ENCODE measurements at regions of chrX and their contacts with region 1.

Region 1: DNA sequence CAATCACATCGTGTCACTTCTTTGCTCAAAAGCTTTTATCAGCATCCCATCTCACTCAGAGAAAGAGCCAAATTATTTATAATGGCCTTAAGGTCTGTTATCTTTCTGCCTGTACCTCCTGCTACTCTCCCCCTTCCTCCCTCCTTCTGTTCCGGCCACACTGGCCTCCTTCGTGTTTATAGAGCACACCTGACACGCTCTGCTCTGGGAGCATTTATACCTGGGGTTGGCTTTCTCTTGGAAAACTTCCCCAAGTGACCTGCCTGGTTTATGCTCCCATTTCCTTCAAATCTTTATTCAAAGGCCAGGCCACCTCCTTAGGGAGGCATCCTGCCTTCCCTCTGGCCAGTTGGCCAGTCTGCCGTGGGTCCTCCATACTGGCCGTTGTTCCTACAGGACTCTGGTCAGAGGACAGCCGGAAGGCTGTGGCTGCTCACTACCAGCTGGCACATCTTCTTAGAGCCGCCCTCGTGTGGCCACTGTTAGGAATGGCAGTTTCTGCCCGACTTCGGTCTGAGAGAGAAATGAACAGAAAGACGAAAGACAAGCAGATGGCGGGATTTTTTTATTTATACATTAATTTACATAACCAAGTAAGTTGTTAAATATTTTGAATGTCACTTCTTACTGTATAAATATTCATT is 80.2 kb upstream of the CBLL2 start:
- DNase-seq: peak; percentile 19 to 53 (median 50)
- H3K4me3 ChIP-seq: no peak overlapping the region
- H3K4me3 Mint-ChIP-seq: no peak overlapping the region
- H3K27ac ChIP-seq: no peak overlapping the region
- H3K27ac Mint-ChIP-seq: peak overlapping the region in 1 of 7 donors; percentile 44
- H3K4me1 ChIP-seq: no peaks in the 10 kb centered on the region
- H3K4me1 Mint-ChIP-seq: peaks cover 2% of the 10 kb centered on the region
- H3K27me3 ChIP-seq: no peaks in the 10 kb centered on the region
- H3K27me3 Mint-ChIP-seq: peaks cover 0 to 2% (median 1%) of the 10 kb centered on the region in 3 donors
- CTCF ChIP-seq: peak; percentile 77

Region 2: GRCh38 chrX:21721195-21721594 is 471.3 kb before region 1 on chrX:
- intact Hi-C with region 1: no loop called
- DNase-seq: no peak
- H3K4me3 ChIP-seq: no peak overlapping the region
- H3K4me3 Mint-ChIP-seq: no peak overlapping the region
- H3K27ac ChIP-seq: no peak overlapping the region
- H3K27ac Mint-ChIP-seq: no peak overlapping the region
- H3K4me1 ChIP-seq: peaks cover 3 to 7% of the 10 kb centered on the region in 2 donors
- H3K4me1 Mint-ChIP-seq: peaks cover 7% of the 10 kb centered on the region
- H3K27me3 ChIP-seq: no peaks in the 10 kb centered on the region
- H3K27me3 Mint-ChIP-seq: peaks cover 0 to 2% (median 0%) of the 10 kb centered on the region in 3 donors
- CTCF ChIP-seq: no peak

Region 3: GRCh38 chrX:21985332-21985777 is 207.2 kb before region 1 on chrX:
- intact Hi-C with region 1: loop called (anchors 5 kb)
- DNase-seq: peak; percentile 66 to 69 (median 69)
- H3K4me3 ChIP-seq: no peak overlapping the region
- H3K4me3 Mint-ChIP-seq: no peak overlapping the region
- H3K27ac ChIP-seq: no peak overlapping the region
- H3K27ac Mint-ChIP-seq: peak overlapping the region in 2 of 7 donors; percentile 19 to 31
- H3K4me1 ChIP-seq: peaks cover 0 to 4% of the 10 kb centered on the region in 2 donors
- H3K4me1 Mint-ChIP-seq: peaks cover 10% of the 10 kb centered on the region
- H3K27me3 ChIP-seq: no peaks in the 10 kb centered on the region
- H3K27me3 Mint-ChIP-seq: peaks cover 0 to 2% (median 0%) of the 10 kb centered on the region in 3 donors
- CTCF ChIP-seq: peak; percentile 84

Region 4: DNA sequence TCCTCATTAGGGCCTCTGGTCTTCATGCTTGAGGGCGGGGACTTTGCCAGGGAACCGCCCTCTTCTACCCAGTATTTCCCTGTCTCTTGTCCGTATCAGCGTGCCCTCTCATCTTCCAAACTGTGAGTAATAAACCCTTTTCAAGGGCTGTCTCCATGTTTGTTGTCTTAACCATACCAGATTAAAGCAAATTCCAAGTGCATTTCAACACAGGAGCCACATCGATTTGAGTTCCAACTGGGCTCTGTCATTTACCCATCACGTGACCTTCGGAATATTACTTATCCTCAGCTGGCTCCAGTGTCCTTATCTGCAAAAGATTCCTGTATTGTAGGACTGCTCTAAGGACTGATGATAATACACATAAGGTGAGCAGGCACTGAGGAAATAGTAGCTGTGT is 166.8 kb before region 1 on chrX:
- intact Hi-C with region 1: no loop called
- DNase-seq: no peak
- H3K4me3 ChIP-seq: no peak overlapping the region
- H3K4me3 Mint-ChIP-seq: no peak overlapping the region
- H3K27ac ChIP-seq: no peak overlapping the region
- H3K27ac Mint-ChIP-seq: no peak overlapping the region
- H3K4me1 ChIP-seq: no peaks in the 10 kb centered on the region
- H3K4me1 Mint-ChIP-seq: no peaks in the 10 kb centered on the region
- H3K27me3 ChIP-seq: no peaks in the 10 kb centered on the region
- H3K27me3 Mint-ChIP-seq: peaks cover 1 to 2% (median 2%) of the 10 kb centered on the region in 3 donors
- CTCF ChIP-seq: no peak

Region 5: GRCh38 chrX:22234380-22234779 is 41.8 kb after region 1 on chrX:
- intact Hi-C with region 1: no loop called
- DNase-seq: no peak
- H3K4me3 ChIP-seq: no peak overlapping the region
- H3K4me3 Mint-ChIP-seq: no peak overlapping the region
- H3K27ac ChIP-seq: no peak overlapping the region
- H3K27ac Mint-ChIP-seq: no peak overlapping the region
- H3K4me1 ChIP-seq: no peaks in the 10 kb centered on the region
- H3K4me1 Mint-ChIP-seq: no peaks in the 10 kb centered on the region
- H3K27me3 ChIP-seq: no peaks in the 10 kb centered on the region
- H3K27me3 Mint-ChIP-seq: peaks cover 0 to 5% (median 2%) of the 10 kb centered on the region in 3 donors
- CTCF ChIP-seq: no peak

Region 6: DNA sequence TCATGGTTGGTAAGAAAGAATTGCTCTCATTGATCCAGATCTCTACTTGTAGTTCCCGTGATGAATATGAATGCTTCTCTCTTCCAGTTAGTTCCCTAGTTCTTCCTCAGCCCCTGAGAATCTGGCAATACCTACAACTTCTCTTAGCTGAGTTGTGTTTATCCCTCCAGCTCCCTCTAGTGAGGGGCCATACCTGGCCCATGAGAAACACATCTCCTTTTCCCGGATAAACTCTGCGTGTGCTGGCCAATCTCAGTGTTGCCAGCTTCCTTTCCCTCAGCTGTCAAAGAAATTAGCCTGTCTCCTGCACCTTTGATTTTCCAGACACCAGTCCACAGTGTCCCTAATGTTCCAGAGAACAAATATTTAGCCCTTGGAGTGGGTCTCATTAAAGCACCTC is 85.8 kb after region 1 on chrX:
- intact Hi-C with region 1: no loop called
- DNase-seq: no peak
- H3K4me3 ChIP-seq: no peak overlapping the region
- H3K4me3 Mint-ChIP-seq: no peak overlapping the region
- H3K27ac ChIP-seq: no peak overlapping the region
- H3K27ac Mint-ChIP-seq: no peak overlapping the region
- H3K4me1 ChIP-seq: no peaks in the 10 kb centered on the region
- H3K4me1 Mint-ChIP-seq: no peaks in the 10 kb centered on the region
- H3K27me3 ChIP-seq: no peaks in the 10 kb centered on the region
- H3K27me3 Mint-ChIP-seq: no peaks in the 10 kb centered on the region
- CTCF ChIP-seq: no peak